OCI-LY7 (cell line): ENCODE measurements at regions of chr7 and their contacts with region 1.

Region 1: GRCh38 chr7:139109188-139109982 is at the start of gene ZC3HAV1:
- DNase-seq: peak; percentile 86
- H3K4me3 ChIP-seq: peak within 1 kb of the TSS; percentile 100
- H3K27ac ChIP-seq: peak within 1 kb of the TSS; percentile 83
- H3K4me1 ChIP-seq: peaks cover 30% of the 10 kb centered on the region
- CTCF ChIP-seq: no peak
- total RNA-seq, gene ZC3HAV1: 44.2 and 47.4 TPM in 2 replicates

Region 2: GRCh38 chr7:138459413-138460175 is 649.8 kb before region 1 on chr7:
- CTCF ChIA-PET with region 1: no interaction called
- POLR2A ChIA-PET with region 1: no interaction called
- intact Hi-C with region 1: loop called (anchors 5 kb)
- DNase-seq: no peak
- H3K4me3 ChIP-seq: peak overlapping the region; percentile 67
- H3K27ac ChIP-seq: peak overlapping the region; percentile 26
- H3K4me1 ChIP-seq: peaks cover 7% of the 10 kb centered on the region
- CTCF ChIP-seq: 0 out of 2 replicates have a peak, but pooled peaks have one; percentile 20

Region 3: GRCh38 chr7:139023076-139023475 is 86.3 kb before region 1 on chr7:
- CTCF ChIA-PET with region 1: no interaction called
- POLR2A ChIA-PET with region 1: no interaction called
- intact Hi-C with region 1: no loop called
- DNase-seq: no peak
- H3K4me3 ChIP-seq: no peak overlapping the region
- H3K27ac ChIP-seq: no peak overlapping the region
- H3K4me1 ChIP-seq: no peaks in the 10 kb centered on the region
- CTCF ChIP-seq: no peak

Region 4: GRCh38 chr7:139075031-139075652 is 34.2 kb before region 1 on chr7:
- CTCF ChIA-PET with region 1: no interaction called
- POLR2A ChIA-PET with region 1: interaction called, 8 read pairs
- intact Hi-C with region 1: loop called (anchors 1 kb)
- DNase-seq: peak; percentile 80
- H3K4me3 ChIP-seq: no peak overlapping the region
- H3K27ac ChIP-seq: no peak overlapping the region
- H3K4me1 ChIP-seq: peaks cover 4% of the 10 kb centered on the region
- CTCF ChIP-seq: peak; percentile 92

Region 5: DNA sequence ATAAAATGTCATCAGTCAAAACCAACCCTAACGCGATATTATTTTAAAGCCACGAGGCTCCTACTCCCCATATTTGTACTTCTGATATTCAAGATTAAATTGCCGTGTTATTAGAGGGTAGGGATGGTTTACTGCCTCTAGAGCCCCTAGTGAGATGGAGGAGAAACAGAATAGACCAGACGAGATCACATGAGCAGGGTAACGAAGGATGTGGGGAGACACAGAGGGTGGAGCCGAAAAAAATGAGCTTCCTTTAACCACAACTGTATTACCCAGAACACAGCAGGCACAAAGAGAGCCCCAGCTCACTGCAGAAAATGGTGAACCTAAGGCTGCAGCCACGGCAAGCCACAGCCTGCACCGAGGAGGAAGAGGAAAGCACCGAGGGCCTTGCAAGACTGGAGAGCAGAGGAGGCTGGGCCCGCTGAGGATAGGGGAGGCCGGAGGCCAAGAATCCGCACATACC is 14.2 kb before region 1 on chr7:
- CTCF ChIA-PET with region 1: interaction called, 9 read pairs
- POLR2A ChIA-PET with region 1: interaction called, 51 read pairs
- intact Hi-C with region 1: loop called (anchors 2 kb)
- DNase-seq: peak; percentile 90
- H3K4me3 ChIP-seq: peak overlapping the region; percentile 61
- H3K27ac ChIP-seq: peak overlapping the region; percentile 93
- H3K4me1 ChIP-seq: peaks cover 45% of the 10 kb centered on the region
- CTCF ChIP-seq: peak; percentile 65

Region 6: DNA sequence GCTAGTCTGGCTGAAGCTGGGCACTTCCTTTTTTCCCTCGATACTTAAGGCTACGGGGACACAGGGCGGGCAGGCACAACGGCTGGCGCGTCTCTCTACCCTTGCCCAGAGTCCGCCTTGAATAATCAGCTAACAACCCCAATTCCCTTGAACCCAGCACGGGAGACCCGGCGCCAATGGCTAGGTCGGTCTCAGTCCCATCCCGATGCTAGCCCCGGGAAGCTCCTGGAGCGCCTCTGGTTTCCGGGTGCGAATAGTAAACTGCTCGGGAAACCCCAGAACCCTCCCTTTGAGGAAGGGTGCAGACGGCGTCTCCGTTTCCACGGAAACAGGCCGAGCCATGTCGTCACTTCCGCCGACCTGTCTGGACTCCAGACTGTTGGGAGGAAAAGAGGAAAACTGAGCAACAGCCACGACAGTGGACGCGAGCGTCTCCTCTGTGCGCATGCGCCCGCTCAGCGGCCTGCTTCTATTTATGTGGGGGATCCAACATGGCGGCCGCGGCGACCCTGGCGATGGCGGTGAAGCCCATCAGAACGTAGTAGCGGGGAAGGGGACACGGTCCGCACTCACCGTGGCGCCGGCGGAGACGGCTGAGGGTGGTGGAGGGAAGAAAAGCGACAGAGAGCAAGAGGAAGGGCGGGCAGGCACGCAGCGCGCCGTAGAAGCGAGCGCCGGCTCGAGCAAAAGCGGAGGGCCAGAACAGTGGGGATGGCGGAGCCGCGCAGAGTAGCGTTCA is 121.6 kb after region 1 on chr7 and contains the start of gene UBN2:
- CTCF ChIA-PET with region 1: no interaction called
- POLR2A ChIA-PET with region 1: interaction called, 3 read pairs
- intact Hi-C with region 1: loop called (anchors 2 kb)
- DNase-seq: peak; percentile 96
- H3K4me3 ChIP-seq: peak within 1 kb of the TSS; percentile 97
- H3K27ac ChIP-seq: peak within 1 kb of the TSS; percentile 63
- H3K4me1 ChIP-seq: peaks cover 14% of the 10 kb centered on the region
- CTCF ChIP-seq: no peak
- total RNA-seq, gene UBN2: 7.2 and 8.0 TPM in 2 replicates

Region 7: DNA sequence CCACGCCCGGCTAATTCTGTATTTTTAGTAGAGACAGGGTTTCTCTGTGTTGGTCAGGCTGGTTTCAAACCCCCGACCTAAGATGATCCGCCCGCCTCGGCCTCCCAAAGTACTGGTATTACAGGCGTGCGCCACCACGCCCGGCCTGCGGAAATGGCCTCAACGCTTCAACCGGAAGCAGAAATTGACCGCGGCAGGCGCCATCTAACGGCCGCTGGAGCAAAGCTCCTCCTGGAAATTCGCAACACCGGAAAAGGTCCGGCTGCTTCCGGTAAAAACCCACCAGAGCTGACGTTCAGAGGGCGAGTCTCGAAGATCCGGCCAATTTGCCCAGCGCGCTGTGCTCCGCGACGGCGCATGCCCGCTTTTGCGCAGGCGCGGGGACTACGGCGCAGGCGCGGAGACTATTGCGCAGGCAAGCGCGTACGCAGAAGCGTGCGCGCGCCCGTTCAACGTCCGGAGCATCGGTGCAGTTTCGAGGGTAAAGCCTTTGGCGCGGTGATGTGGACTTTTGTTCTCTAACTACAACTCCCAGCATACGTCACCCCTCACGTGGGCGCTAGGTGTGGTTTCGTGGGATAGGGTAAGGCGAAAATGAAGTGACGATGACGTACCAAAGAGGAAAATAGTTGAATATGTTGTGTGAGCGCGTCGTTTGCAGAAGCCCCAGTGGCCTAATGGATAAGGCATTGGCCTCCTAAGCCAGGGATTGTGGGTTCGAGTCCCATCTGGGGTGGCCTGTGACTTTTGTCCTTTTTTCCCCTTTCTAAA is 230.8 kb after region 1 on chr7:
- CTCF ChIA-PET with region 1: no interaction called
- POLR2A ChIA-PET with region 1: no interaction called
- intact Hi-C with region 1: loop called (anchors 2 kb)
- DNase-seq: peak; percentile 99
- H3K4me3 ChIP-seq: peak overlapping the region; percentile 90
- H3K27ac ChIP-seq: peak overlapping the region; percentile 94
- H3K4me1 ChIP-seq: peaks cover 15% of the 10 kb centered on the region
- CTCF ChIP-seq: peak; percentile 81

Region 8: GRCh38 chr7:139359366-139360209 is 250.2 kb after region 1 on chr7 and contains the start of gene LUC7L2:
- CTCF ChIA-PET with region 1: no interaction called
- POLR2A ChIA-PET with region 1: no interaction called
- intact Hi-C with region 1: loop called (anchors 2 kb)
- DNase-seq: peak; percentile 99
- H3K4me3 ChIP-seq: peak within 1 kb of the TSS; percentile 90
- H3K27ac ChIP-seq: peak within 1 kb of the TSS; percentile 93
- H3K4me1 ChIP-seq: peaks cover 30% of the 10 kb centered on the region
- CTCF ChIP-seq: 0 out of 2 replicates have a peak, but pooled peaks have one; percentile 26
- total RNA-seq, gene LUC7L2: 79.6 and 94.9 TPM in 2 replicates